CD14-positive monocyte (primary cell): ENCODE measurements at regions of chr1 and their contacts with region 1.

Region 1: DNA sequence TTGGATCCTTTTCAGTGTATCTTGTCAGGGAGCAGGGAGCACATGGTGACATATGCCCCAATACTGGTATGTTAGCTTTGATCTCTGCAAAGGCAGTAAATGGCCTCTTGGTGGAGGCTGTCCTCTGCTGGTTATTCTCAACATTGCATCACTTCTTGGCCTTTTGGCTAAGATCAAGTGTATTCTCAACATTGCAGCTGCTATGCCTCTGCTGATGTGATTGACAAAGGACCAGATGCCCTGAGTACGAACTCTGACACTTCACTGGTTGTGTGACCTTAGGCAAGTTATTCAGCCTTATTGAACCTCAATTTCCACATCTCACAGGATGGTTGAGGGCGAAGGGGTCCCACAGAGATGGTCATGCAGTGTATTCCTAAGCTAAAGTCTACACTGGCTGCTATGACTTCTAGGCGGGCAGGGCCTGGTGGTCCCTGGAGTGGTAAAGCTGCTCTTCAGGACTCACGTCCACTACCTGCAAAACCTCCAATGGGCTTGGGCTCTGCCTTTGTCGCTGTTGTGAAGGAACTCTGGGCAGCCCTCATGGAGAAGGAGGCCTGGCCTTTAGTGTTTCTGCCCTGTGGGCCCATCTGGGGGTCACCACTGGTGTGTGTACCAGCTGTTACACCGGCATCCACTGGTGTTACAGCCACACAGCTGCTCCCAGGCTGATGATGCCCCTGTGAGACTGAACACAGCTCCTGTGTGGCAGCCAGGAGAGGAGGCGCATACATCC is 64.8 kb downstream of the DNTTIP2 start:
- DNase-seq: peak; percentile 21 to 57 (median 49)
- H3K4me3 ChIP-seq: no peak overlapping the region
- H3K4me3 Mint-ChIP-seq: no peak overlapping the region
- H3K27ac ChIP-seq: no peak overlapping the region
- H3K27ac Mint-ChIP-seq: no peak overlapping the region
- H3K4me1 ChIP-seq: peaks cover 29 to 37% of the 10 kb centered on the region in 2 donors
- H3K4me1 Mint-ChIP-seq: peaks cover 42% of the 10 kb centered on the region
- H3K27me3 ChIP-seq: no peaks in the 10 kb centered on the region
- H3K27me3 Mint-ChIP-seq: peaks cover 0 to 2% (median 0%) of the 10 kb centered on the region in 3 donors
- CTCF ChIP-seq: peak; percentile 94

Region 2: GRCh38 chr1:93304716-93305138 is 509.5 kb before region 1 on chr1:
- intact Hi-C with region 1: loop called in 1 of 2 experiments (anchors 10 kb)
- DNase-seq: peak; percentile 48 to 77 (median 65)
- H3K4me3 ChIP-seq: no peak overlapping the region
- H3K4me3 Mint-ChIP-seq: no peak overlapping the region
- H3K27ac ChIP-seq: no peak overlapping the region
- H3K27ac Mint-ChIP-seq: peak overlapping the region in 1 of 7 donors; percentile 71
- H3K4me1 ChIP-seq: no peaks in the 10 kb centered on the region
- H3K4me1 Mint-ChIP-seq: no peaks in the 10 kb centered on the region
- H3K27me3 ChIP-seq: no peaks in the 10 kb centered on the region
- H3K27me3 Mint-ChIP-seq: no peaks in the 10 kb centered on the region
- CTCF ChIP-seq: peak; percentile 84

Region 3: DNA sequence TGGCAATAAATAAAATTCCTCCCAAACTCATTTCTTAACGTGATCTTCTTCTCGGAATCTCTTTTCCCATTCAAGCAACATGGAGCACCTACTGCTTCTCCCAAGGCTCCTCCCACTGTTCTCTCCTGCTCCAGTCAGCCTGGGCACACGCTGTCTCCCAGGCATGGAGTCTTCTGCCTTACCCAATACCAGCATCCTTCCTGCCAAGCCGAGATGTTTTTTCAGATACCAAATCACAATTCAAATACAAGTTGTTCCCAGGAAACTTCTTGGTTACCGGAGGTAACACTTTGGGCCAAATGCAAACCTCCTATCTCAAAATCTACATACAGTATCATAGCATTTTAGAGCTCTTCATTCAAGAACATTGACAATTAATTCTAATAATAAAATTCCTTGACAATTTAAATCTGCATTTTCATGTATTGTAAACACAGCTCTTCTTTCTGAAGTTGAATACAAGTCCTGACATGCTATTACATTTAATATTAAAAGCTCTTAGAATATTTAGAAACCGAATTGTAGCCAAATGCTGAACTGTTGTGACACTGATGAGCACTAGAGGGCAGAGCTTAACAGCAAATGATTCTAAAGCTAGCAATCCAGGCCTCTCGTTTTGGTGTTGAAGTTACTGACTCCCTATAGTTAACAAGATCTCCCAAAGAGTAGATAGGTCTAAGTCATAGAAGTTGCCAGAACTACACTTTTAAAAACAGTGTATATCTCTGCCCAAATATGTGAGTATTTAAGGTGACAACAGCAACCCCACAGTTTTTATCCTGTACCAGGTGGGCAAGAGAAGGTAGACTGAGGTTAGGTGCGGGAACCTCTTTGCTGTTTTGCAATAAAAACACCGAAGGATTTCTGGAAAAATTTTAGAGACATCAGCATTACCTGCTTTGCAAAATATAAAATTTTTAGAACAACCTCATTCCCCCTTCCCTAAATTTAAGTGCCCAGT is 184.8 kb before region 1 on chr1:
- intact Hi-C with region 1: loop called (anchors 2 to 5 kb)
- DNase-seq: peak; percentile 42 to 66 (median 61)
- H3K4me3 ChIP-seq: no peak overlapping the region
- H3K4me3 Mint-ChIP-seq: no peak overlapping the region
- H3K27ac ChIP-seq: no peak overlapping the region
- H3K27ac Mint-ChIP-seq: no peak overlapping the region
- H3K4me1 ChIP-seq: no peaks in the 10 kb centered on the region
- H3K4me1 Mint-ChIP-seq: no peaks in the 10 kb centered on the region
- H3K27me3 ChIP-seq: no peaks in the 10 kb centered on the region
- H3K27me3 Mint-ChIP-seq: peaks cover 0 to under 1% (median 0%) of the 10 kb centered on the region in 3 donors
- CTCF ChIP-seq: peak; percentile 84